ENCODE measurements at regions of chr20 and their contacts with region 1.

Region 1: DNA sequence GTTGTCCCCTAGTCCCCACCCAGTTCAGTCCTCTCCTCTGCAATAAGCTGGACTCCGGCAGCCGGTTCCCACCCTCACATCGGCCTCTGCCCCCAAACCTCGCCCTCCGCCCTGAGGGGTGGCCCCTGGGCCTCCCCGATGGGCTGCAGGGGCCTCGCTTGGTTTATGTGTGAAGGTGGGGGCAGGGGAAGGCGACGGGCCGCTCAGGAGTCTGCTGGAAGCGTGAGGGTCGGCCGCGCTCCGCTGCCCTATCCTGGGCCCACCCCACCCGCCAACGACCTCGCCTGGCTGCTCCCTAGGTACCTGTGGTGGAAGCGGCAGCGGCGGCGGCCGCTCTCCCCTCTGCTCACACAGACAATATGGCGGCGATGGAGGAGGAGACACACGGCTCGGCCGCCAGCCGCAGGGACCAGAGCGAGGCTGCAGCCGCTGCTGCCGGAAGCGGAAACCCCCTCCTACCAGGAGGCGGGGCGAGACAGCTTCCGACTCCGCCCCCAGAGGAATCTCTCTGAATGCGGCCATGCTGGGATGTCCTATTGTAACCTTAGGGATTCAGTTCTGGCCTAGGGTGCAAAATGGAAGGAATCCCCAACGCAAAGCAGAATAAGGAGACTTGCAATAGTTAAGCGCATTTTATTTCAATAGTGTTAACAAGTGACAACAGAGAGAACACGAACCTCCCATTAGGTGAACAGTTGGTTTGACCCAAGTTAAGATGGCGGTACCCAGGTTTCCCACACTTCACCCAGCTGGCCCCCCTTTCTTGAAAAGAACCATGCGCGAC is at the start of gene CSNK2A1:
- DNase-seq: peak; percentile 98
- ATAC-seq: peak; percentile 91
- H3K4me3 Mint-ChIP-seq: peak within 1 kb of the TSS; percentile 96
- H3K27ac Mint-ChIP-seq: peak within 1 kb of the TSS; percentile 99
- H3K4me1 Mint-ChIP-seq: peaks cover 56% of the 10 kb centered on the region
- H3K27me3 Mint-ChIP-seq: no peaks in the 10 kb centered on the region
- CTCF ChIP-seq: no peak
- total RNA-seq, gene CSNK2A1: 130 and 140 TPM in 2 replicates

Region 2: GRCh38 chr20:347640-348484 is 195.7 kb before region 1 on chr20:
- CTCF ChIA-PET with region 1: no interaction called
- POLR2A ChIA-PET with region 1: no interaction called
- intact Hi-C with region 1: loop called (anchors 5 kb)
- DNase-seq: peak; percentile 65
- ATAC-seq: peak; percentile 82
- H3K4me3 Mint-ChIP-seq: peak overlapping the region; percentile 88
- H3K27ac Mint-ChIP-seq: peak overlapping the region; percentile 68
- H3K4me1 Mint-ChIP-seq: peaks cover 13% of the 10 kb centered on the region
- H3K27me3 Mint-ChIP-seq: no peaks in the 10 kb centered on the region
- CTCF ChIP-seq: no peak

Region 3: GRCh38 chr20:407133-407952 is 136.2 kb before region 1 on chr20:
- CTCF ChIA-PET with region 1: no interaction called
- POLR2A ChIA-PET with region 1: interaction called, 10 read pairs
- intact Hi-C with region 1: loop called (anchors 2 kb)
- DNase-seq: no peak
- ATAC-seq: peak; percentile 70
- H3K4me3 Mint-ChIP-seq: peak overlapping the region; percentile 88
- H3K27ac Mint-ChIP-seq: peak overlapping the region; percentile 91
- H3K4me1 Mint-ChIP-seq: peaks cover 44% of the 10 kb centered on the region
- H3K27me3 Mint-ChIP-seq: no peaks in the 10 kb centered on the region
- CTCF ChIP-seq: no peak

Region 4: DNA sequence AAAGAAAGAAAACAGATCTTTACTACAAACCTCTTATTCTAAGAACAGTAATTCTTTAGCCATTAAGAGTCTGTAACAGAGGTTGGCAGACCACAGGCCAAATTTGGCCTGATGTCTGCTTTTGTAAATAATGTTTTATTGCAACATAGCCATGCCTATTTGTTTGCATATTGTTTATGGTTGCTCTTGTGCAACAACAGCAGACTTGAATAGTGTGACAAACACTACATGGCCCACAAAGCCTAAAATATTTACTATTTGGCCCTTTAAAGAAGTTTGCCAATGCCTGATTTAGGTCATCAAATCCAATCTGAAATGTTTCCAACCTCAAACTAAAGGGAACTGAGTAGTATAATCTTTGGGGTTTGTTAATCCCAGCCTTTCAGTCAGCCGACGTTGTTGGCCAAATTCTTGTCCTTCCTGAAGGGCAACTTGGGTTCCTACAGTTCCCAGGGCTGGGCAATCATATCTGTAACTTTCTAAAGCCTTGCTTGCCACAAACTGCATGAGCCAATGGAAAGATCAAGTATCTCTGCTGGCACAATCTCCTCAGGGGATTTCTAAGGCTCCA is 47.4 kb before region 1 on chr20:
- CTCF ChIA-PET with region 1: no interaction called
- POLR2A ChIA-PET with region 1: no interaction called
- intact Hi-C with region 1: loop called (anchors 5 kb)
- DNase-seq: no peak
- ATAC-seq: no peak
- H3K4me3 Mint-ChIP-seq: no peak overlapping the region
- H3K27ac Mint-ChIP-seq: no peak overlapping the region
- H3K4me1 Mint-ChIP-seq: no peaks in the 10 kb centered on the region
- H3K27me3 Mint-ChIP-seq: no peaks in the 10 kb centered on the region
- CTCF ChIP-seq: no peak

Region 5: DNA sequence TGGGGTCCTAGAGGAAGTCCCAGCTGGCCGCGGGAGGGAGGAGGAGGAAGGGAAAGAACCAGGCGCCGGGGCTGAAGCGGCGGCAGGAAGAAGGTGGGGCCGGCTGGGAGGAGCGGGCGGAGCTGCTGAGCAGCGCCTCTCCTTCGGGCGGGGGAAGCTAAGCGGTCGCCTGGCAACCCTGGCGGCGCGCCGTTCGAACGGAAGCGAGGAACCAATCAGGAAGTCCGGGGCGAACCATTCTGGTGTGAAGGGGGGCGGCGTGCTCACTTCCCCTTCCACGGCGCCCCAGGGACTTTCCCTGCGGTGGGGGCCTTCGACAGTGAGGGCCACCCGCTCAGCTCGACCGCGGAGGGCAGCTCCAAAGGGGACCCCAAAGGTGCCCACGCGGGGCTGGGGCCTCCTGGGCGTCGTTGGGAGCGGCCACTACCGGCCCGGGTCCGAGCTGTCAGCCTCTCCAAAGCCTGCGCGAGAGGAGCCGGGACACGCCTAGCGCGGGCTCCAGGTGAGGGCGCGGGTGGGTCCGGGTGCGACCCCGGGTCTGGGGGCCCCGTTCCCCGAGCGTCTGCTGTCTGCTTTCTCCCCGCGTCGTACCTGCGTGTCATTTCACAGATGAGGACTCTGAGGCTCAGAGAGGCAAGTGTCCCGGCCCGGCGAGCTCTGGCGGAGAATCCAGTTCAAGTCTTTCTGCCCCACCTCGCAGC is 290.0 kb after region 1 on chr20 and contains the start of gene FAM110A:
- CTCF ChIA-PET with region 1: no interaction called
- POLR2A ChIA-PET with region 1: interaction called, 13 read pairs
- intact Hi-C with region 1: loop called (anchors 1 kb)
- DNase-seq: peak; percentile 91
- ATAC-seq: peak; percentile 92
- H3K4me3 Mint-ChIP-seq: peak within 1 kb of the TSS; percentile 88
- H3K27ac Mint-ChIP-seq: peak within 1 kb of the TSS; percentile 81
- H3K4me1 Mint-ChIP-seq: peaks cover 44% of the 10 kb centered on the region
- H3K27me3 Mint-ChIP-seq: no peaks in the 10 kb centered on the region
- CTCF ChIP-seq: no peak
- total RNA-seq, gene FAM110A: 9.2 and 11.0 TPM in 2 replicates

Region 6: GRCh38 chr20:1466211-1467081 is 922.9 kb after region 1 on chr20 and contains the start of gene NSFL1C:
- CTCF ChIA-PET with region 1: no interaction called
- POLR2A ChIA-PET with region 1: no interaction called
- intact Hi-C with region 1: loop called (anchors 5 kb)
- DNase-seq: peak; percentile 100
- ATAC-seq: peak; percentile 92
- H3K4me3 Mint-ChIP-seq: peak within 1 kb of the TSS; percentile 86
- H3K27ac Mint-ChIP-seq: peak within 1 kb of the TSS; percentile 89
- H3K4me1 Mint-ChIP-seq: peaks cover 81% of the 10 kb centered on the region
- H3K27me3 Mint-ChIP-seq: no peaks in the 10 kb centered on the region
- CTCF ChIP-seq: peak; percentile 93
- total RNA-seq, gene NSFL1C: 81.7 and 89.4 TPM in 2 replicates

Region 7: GRCh38 chr20:1965520-1966351 is 1422.2 kb after region 1 on chr20:
- CTCF ChIA-PET with region 1: no interaction called
- POLR2A ChIA-PET with region 1: no interaction called
- intact Hi-C with region 1: no loop called
- DNase-seq: peak; percentile 81
- ATAC-seq: peak; percentile 91
- H3K4me3 Mint-ChIP-seq: peak overlapping the region; percentile 77
- H3K27ac Mint-ChIP-seq: peak overlapping the region; percentile 78
- H3K4me1 Mint-ChIP-seq: peaks cover 17% of the 10 kb centered on the region
- H3K27me3 Mint-ChIP-seq: peaks cover 1% of the 10 kb centered on the region
- CTCF ChIP-seq: peak; percentile 68

Measured in activated B cell treated with CpG ODN at 0.5 μM for 24 hours (primary cell).